ENCODE measurements at regions of chr12 and their contacts with region 1.

Region 1: GRCh38 chr12:117119592-117120198 is 20.5 kb upstream of the TESC start:
- DNase-seq: no peak
- ATAC-seq: peak; percentile 61 to 75 (median 64)
- H3K4me3 ChIP-seq: no peak overlapping the region
- H3K27ac ChIP-seq: no peak overlapping the region
- H3K4me1 ChIP-seq: no peaks in the 10 kb centered on the region
- H3K27me3 ChIP-seq: no peaks in the 10 kb centered on the region
- CTCF ChIP-seq: peak; percentile 60 to 63 (median 60)
- POLR2A ChIP-seq: no peak

Region 2: DNA sequence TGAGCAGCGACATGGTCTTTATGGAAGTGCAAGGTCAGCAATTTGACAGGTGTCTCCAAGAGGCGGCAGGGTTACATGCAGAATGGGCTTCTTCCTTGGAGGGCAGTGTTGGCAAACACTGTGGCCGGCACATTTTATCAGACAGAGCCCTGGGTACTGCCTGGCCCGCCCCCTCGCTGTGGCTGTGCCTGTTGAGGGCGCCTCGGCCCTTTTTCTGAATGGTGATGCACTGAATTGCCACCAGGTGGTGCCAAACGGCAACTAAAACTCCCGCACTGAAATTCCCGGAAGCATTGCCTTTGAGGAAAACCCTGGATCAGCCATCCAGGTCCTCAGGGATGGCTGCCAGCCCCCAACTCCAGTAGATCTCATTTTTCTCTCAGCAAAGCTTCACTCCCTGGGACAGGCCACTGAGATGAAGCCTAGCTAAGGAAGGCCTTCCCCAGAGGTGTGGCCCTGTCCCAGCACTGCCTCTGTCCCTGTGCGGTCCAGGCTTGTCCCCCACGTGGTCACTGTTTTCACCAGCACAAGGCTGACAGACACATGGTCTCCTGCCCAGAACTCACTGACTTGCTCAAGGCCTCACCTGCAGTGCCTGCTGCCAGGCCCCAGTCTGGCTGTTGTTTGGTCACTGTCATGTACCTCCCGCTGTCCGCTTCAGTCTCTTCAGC is 94.1 kb before region 1 on chr12:
- intact Hi-C with region 1: loop called in 1 of 2 experiments (anchors 10 kb)
- DNase-seq: peak in 2 of 3 donors; percentile 50 to 64
- ATAC-seq: peak; percentile 75 to 93 (median 89)
- H3K4me3 ChIP-seq: no peak overlapping the region
- H3K27ac ChIP-seq: no peak overlapping the region
- H3K4me1 ChIP-seq: no peaks in the 10 kb centered on the region
- H3K27me3 ChIP-seq: no peaks in the 10 kb centered on the region
- CTCF ChIP-seq: peak; percentile 81 to 88 (median 82)
- POLR2A ChIP-seq: no peak

Region 3: DNA sequence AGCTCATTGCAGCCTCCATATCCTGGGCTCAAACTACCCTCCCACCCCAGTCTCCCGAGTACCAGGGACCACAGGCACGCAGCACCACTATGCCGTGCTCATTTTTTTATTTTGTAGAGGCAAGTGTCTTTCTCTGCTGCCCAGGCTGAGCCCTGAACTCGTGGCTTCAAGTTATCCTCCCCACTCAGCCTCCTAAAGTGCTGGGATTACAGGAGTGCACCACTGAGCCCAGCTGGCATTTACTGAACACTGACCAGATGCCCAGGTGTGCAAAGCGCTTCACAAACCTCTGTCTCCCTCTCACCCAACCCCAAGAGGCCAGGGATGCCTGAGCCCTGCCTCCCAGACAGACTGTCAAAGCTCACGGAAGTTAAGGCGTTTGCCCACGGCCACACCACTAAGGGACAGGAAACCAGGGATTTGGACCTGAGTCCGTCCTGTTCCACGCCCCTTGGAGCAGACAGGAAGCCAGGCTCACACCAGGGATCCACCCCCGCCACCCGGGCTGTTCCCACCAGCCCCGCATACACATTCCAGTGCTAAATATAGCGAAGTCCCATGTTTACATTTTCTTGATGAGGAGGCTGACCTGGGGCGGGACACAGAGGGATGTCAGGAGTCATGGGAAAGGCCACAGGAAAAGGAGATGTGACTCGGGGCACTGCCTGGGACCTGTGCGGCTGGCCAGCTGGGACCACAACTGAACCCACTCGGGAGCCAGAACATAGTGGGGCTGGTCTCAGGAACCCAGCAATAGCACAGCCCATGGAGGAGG is 71.7 kb before region 1 on chr12:
- intact Hi-C with region 1: loop called in 1 of 2 experiments (anchors 10 kb)
- DNase-seq: no peak
- ATAC-seq: peak; percentile 11 to 53 (median 19)
- H3K4me3 ChIP-seq: no peak overlapping the region
- H3K27ac ChIP-seq: no peak overlapping the region
- H3K4me1 ChIP-seq: no peaks in the 10 kb centered on the region
- H3K27me3 ChIP-seq: no peaks in the 10 kb centered on the region
- CTCF ChIP-seq: no peak
- POLR2A ChIP-seq: no peak